PC-3 (cell line): ENCODE measurements at regions of chr5 and their contacts with region 1.

Region 1: GRCh38 chr5:87769157-87769556 is 356.4 kb upstream of the CCNH start:
- DNase-seq: peak; percentile 94
- ATAC-seq: peak; percentile 100
- H3K4me3 ChIP-seq: no peak overlapping the region
- H3K27ac ChIP-seq: peak overlapping the region; percentile 29
- H3K4me1 ChIP-seq: peaks cover 13% of the 10 kb centered on the region
- H3K27me3 ChIP-seq: no peaks in the 10 kb centered on the region
- CTCF ChIP-seq: no peak

Region 2: GRCh38 chr5:87412630-87413342 is 356.4 kb before region 1 on chr5 and contains the start of gene CCNH:
- CTCF ChIA-PET with region 1: no interaction called
- POLR2A ChIA-PET with region 1: no interaction called
- intact Hi-C with region 1: loop called (anchors 10 kb)
- DNase-seq: peak; percentile 100
- ATAC-seq: peak; percentile 97
- H3K4me3 ChIP-seq: peak within 1 kb of the TSS; percentile 84
- H3K27ac ChIP-seq: peak within 1 kb of the TSS; percentile 55
- H3K4me1 ChIP-seq: peaks cover 19% of the 10 kb centered on the region
- H3K27me3 ChIP-seq: no peaks in the 10 kb centered on the region
- CTCF ChIP-seq: no peak
- total RNA-seq, gene CCNH: 77.6 and 121 TPM in 2 replicates

Region 3: DNA sequence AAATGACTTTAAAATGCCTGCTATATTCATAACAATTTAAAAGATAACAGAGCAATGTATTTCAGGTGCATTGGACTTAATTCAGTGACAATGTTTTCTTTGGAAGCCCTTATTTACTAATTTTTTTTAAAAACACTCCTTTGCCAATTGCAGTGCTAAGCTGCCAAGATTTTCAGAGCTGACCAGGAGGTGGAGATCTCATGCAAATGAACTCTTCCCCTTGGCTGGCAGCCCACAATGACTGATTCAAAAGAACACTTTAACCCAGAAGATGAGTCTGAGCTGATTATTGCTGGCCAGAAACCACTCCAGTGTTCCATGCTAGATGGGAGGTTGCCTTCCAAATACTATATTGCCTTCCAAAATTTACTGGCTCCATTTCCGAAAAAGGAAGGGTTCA is 228.1 kb before region 1 on chr5:
- CTCF ChIA-PET with region 1: no interaction called
- POLR2A ChIA-PET with region 1: no interaction called
- intact Hi-C with region 1: loop called (anchors 5 kb)
- DNase-seq: peak; percentile 90
- ATAC-seq: peak; percentile 95
- H3K4me3 ChIP-seq: no peak overlapping the region
- H3K27ac ChIP-seq: no peak overlapping the region
- H3K4me1 ChIP-seq: peaks cover 6% of the 10 kb centered on the region; the same call in 1 of the 2 replicates
- H3K27me3 ChIP-seq: peaks cover 4% of the 10 kb centered on the region; the same call in 1 of the 2 replicates
- CTCF ChIP-seq: peak; percentile 57

Region 4: GRCh38 chr5:87705876-87706275 is 63.3 kb before region 1 on chr5:
- CTCF ChIA-PET with region 1: no interaction called
- POLR2A ChIA-PET with region 1: interaction called, 30 read pairs
- intact Hi-C with region 1: no loop called
- DNase-seq: no peak
- ATAC-seq: no peak
- H3K4me3 ChIP-seq: no peak overlapping the region
- H3K27ac ChIP-seq: no peak overlapping the region
- H3K4me1 ChIP-seq: no peaks in the 10 kb centered on the region
- H3K27me3 ChIP-seq: no peaks in the 10 kb centered on the region
- CTCF ChIP-seq: no peak